CD8-positive, alpha-beta memory T cell (primary cell): ENCODE measurements at regions of chr19 and their contacts with region 1.

Region 1: DNA sequence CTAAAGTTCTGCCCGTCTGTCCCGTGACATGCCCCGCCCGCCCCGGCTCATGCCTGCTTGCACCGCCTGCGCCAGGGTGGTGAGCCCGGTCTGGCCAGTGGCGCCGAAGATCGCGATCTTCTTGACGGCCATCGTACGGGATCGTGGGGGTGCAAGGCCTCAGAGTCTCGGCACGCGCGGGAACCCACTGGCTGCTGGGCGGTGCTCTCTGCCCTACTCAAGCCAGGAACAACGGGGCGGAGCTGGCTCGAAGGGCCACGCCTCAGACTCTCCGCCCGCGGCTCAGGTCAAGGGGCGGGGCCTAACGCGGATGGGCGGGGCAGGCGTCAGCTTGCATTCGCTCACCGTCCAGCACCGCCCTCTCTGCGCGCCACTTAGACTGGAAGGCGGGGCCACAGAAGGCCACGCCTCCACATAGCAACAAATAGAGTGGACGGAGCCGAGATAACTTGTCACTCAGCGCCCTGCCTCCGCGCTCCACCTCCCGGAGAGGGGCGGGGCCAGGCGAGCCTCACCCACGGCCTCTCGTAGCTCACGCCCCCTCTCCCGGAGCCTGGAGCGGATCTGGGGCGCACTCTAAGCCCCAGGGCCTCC is at the start of gene BLVRB:
- DNase-seq: peak; percentile 99 to 100 (median 99)
- H3K4me3 ChIP-seq: peak within 1 kb of the TSS; percentile 84
- H3K4me3 Mint-ChIP-seq: peak within 1 kb of the TSS; percentile 69 to 94 (median 86)
- H3K27ac ChIP-seq: peak within 1 kb of the TSS; percentile 87
- H3K27ac Mint-ChIP-seq: peak within 1 kb of the TSS; percentile 74 to 99 (median 96)
- H3K4me1 ChIP-seq: peaks cover 22% of the 10 kb centered on the region
- H3K4me1 Mint-ChIP-seq: peaks cover 23 to 32% (median 25%) of the 10 kb centered on the region in 3 donors
- H3K27me3 ChIP-seq: peaks cover 3% of the 10 kb centered on the region
- H3K27me3 Mint-ChIP-seq: peaks cover 9 to 16% of the 10 kb centered on the region in 2 donors
- total RNA-seq, gene BLVRB: 17.4 to 18.9 TPM

Region 2: GRCh38 chr19:40425450-40426287 is 40.0 kb before region 1 on chr19 and contains the start of gene SERTAD1:
- CTCF ChIA-PET with region 1: interaction called, 46 read pairs
- POLR2A ChIA-PET with region 1: interaction called, 11 read pairs
- DNase-seq: peak; percentile 100
- H3K4me3 ChIP-seq: peak within 1 kb of the TSS; percentile 97
- H3K4me3 Mint-ChIP-seq: peak within 1 kb of the TSS; percentile 90 to 99 (median 96)
- H3K27ac ChIP-seq: peak within 1 kb of the TSS; percentile 90
- H3K27ac Mint-ChIP-seq: peak within 1 kb of the TSS; percentile 94 to 100 (median 98)
- H3K4me1 ChIP-seq: peaks cover 20% of the 10 kb centered on the region
- H3K4me1 Mint-ChIP-seq: peaks cover 25 to 33% (median 31%) of the 10 kb centered on the region in 3 donors
- H3K27me3 ChIP-seq: no peaks in the 10 kb centered on the region
- H3K27me3 Mint-ChIP-seq: peaks cover 0 to 5% of the 10 kb centered on the region in 2 donors
- total RNA-seq, gene SERTAD1: 15.9 to 17.8 TPM

Region 3: GRCh38 chr19:40444192-40445028 is 21.2 kb before region 1 on chr19 and contains the start of gene SERTAD3:
- CTCF ChIA-PET with region 1: interaction called, 19 read pairs
- POLR2A ChIA-PET with region 1: interaction called, 27 read pairs
- DNase-seq: peak; percentile 95 to 98 (median 97)
- H3K4me3 ChIP-seq: peak within 1 kb of the TSS; percentile 100
- H3K4me3 Mint-ChIP-seq: peak within 1 kb of the TSS; percentile 93 to 100 (median 98)
- H3K27ac ChIP-seq: peak within 1 kb of the TSS; percentile 98
- H3K27ac Mint-ChIP-seq: peak within 1 kb of the TSS; percentile 88 to 100 (median 98)
- H3K4me1 ChIP-seq: peaks cover 14% of the 10 kb centered on the region
- H3K4me1 Mint-ChIP-seq: peaks cover 15 to 24% (median 17%) of the 10 kb centered on the region in 3 donors
- H3K27me3 ChIP-seq: no peaks in the 10 kb centered on the region
- H3K27me3 Mint-ChIP-seq: peaks cover 0 to 5% of the 10 kb centered on the region in 2 donors
- total RNA-seq, gene SERTAD3: 7.0 to 8.5 TPM

Region 4: GRCh38 chr19:40452016-40452415 is 13.6 kb before region 1 on chr19:
- CTCF ChIA-PET with region 1: interaction called, 11 read pairs
- POLR2A ChIA-PET with region 1: no interaction called
- DNase-seq: no peak
- H3K4me3 ChIP-seq: no peak overlapping the region
- H3K4me3 Mint-ChIP-seq: no peak overlapping the region
- H3K27ac ChIP-seq: no peak overlapping the region
- H3K27ac Mint-ChIP-seq: no peak overlapping the region
- H3K4me1 ChIP-seq: no peaks in the 10 kb centered on the region
- H3K4me1 Mint-ChIP-seq: no peaks in the 10 kb centered on the region
- H3K27me3 ChIP-seq: no peaks in the 10 kb centered on the region
- H3K27me3 Mint-ChIP-seq: no peaks in the 10 kb centered on the region

Region 5: DNA sequence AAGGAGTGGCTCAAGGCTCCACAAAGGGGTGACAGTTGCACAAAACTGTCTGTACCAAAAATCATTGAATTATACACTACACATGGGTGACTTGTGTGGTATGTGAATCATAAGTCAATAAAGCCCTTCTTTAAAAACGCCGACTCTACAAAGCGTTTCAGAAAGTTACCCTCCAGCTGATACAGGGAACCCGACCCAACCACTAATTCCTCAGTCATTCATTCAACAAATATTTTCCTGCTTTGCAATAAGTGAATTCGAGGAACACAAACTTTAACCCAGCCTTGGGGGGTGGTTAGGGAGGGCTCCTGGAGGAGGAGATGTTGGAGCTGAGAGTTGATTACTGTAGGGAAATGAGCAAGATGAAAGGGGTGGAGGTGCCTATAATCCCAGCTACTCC is 167.6 kb after region 1 on chr19:
- CTCF ChIA-PET with region 1: interaction called, 15 read pairs
- POLR2A ChIA-PET with region 1: no interaction called
- DNase-seq: no peak
- H3K4me3 ChIP-seq: no peak overlapping the region
- H3K4me3 Mint-ChIP-seq: no peak overlapping the region
- H3K27ac ChIP-seq: no peak overlapping the region
- H3K27ac Mint-ChIP-seq: no peak overlapping the region
- H3K4me1 ChIP-seq: no peaks in the 10 kb centered on the region
- H3K4me1 Mint-ChIP-seq: peaks cover 0 to 8% (median 5%) of the 10 kb centered on the region in 3 donors
- H3K27me3 ChIP-seq: no peaks in the 10 kb centered on the region
- H3K27me3 Mint-ChIP-seq: peaks cover 2 to 6% of the 10 kb centered on the region in 2 donors